GM18951 (cell line): ENCODE measurements at regions of chr6 and their contacts with region 1.

Region 1: GRCh38 chr6:84774157-84774984 is 10.0 kb upstream of the TBX18 start:
- POLR2A ChIP-seq: no peak

Region 2: DNA sequence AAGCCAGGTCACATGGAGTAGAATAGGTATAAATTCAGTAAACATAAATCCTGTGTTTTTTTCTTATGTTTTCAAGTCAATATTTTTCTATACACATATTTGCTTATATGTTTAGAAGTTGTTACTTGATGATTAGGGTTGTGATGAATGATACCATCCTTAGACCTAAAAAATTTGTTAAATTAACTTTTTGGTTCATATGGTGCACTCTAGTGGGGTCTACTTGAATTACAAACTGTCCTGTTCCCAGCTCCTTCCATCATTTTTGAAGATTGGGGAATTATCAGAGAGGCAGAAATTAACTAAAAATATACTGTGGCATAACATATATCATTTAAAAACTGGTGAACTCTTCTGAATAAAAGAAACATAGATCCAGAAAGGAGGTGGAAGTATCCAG is 969.5 kb before region 1 on chr6:
- in situ Hi-C with region 1: no loop called
- POLR2A ChIP-seq: no peak

Region 3: DNA sequence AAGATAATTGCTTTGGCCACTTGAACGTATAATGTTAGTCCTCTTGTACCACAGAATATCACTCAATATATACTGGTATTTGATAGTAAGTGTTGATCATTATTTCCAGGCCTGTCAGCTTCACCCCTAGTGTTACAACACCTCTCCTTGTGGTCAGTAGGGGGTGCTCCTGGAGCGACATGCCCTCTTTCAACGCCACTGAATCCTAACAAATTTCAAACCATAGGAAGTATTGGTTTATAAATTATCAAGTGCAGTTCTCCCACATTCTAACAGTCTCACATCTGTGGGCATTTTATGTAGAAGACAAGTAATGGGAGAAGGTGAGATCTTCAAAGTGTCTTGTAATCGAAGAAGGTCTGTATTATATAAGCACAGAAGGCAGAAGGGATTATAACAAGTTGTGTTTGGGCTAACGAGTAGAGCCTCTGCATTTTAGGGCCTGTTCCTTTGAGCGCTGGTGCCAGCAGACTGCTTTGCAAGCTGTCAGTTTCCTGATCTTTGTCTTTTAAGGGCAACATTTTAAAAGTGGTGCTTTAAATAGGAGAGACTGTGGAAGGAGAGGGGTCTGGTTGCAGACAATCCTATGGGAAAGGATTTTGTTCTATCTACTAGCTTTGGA is 489.8 kb before region 1 on chr6:
- in situ Hi-C with region 1: loop called (anchors 25 kb)
- POLR2A ChIP-seq: no peak